Mammary epithelial cell (primary cell): ENCODE measurements at regions of chr16 and their contacts with region 1.

Region 1: DNA sequence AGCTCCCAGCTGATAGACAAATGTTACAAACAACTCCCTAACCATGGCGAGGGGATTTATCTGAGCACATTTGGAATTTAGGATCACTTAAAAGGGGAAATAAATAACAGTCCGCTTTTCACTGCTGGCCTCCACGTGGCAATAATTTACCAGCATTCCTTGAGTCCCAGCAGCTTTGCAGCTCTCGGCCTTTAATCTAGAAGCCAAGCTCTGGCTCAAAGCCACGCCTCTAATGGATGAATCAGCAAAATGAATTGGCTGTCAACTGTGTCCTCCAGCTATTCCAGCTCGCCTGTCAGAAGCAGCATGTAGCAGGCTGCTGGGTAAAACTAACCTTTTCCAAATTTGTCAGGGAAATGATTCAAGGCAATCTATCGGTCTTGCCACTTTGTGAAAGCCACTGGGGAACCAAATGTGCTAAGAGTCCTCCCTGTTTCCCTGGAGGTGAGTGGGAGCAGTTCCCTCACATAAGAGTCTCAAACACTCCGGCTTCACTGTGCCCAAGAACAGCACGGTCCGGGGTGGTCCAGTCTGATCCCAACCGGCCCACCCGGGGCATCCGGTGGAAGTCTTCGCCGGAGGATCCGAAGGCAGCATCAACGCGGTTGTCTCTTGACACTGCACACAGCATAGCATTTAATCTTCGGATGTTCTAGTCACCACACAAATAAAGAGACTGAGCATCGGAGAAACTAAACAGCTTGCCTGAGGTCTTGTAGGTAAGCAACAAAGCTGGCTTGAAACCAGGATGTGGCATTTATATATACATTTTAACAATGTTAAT is 143.3 kb downstream of the PARN start:
- DNase-seq: peak; percentile 87
- H3K4me3 ChIP-seq: peak overlapping the region; percentile 16 to 39 (median 22)
- H3K27ac ChIP-seq: peak overlapping the region; percentile 50
- H3K4me1 ChIP-seq: peaks cover 17% of the 10 kb centered on the region
- H3K27me3 ChIP-seq: no peaks in the 10 kb centered on the region
- CTCF ChIP-seq: no peak

Region 2: DNA sequence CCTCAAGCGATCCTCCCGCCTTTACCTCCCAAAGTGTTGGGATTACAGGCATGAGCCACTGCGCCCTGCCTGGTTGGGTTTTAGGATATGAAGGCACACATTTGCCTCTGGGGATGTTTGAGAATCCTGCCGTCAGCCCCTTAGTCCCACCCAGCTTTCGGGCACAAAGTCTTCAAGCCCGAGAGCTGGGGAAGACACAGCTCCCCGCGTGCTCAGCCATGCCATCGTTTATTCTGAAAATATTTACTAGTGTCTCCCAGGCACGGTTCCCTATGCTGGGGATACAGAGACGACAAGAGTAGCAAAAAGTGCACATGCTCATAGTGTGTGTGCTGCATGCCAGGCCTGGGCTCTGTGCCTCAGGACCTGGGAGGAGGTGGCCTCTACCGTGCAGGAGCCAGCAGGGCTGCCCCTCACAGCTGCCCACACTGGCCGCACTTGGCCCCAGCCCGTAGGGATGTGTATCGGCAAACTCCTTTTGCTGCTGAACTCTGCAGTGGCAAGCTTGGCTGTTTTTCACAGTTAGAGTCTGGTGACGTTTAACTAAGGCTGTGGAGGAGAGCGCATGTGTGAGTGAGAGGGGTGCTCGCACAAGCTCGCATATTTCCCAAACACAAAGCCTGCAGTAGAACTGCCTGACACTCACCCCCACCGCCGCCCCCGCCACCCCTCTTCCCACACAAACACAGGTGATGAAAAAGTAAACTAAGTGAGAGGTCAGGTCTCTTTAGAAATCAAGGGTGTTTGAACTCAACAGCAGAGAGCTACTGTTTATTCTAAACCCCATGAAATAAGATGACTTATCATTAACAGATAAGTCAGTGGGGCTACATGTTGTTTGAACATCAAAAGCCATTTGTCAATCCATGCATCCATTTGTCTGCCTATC is 149.2 kb before region 1 on chr16:
- CTCF ChIA-PET with region 1: no interaction called
- dilution Hi-C with region 1: no loop called
- in situ Hi-C with region 1: no loop called
- intact Hi-C with region 1: no loop called
- DNase-seq: no peak
- H3K4me3 ChIP-seq: no peak overlapping the region
- H3K27ac ChIP-seq: no peak overlapping the region
- H3K4me1 ChIP-seq: peaks cover 6% of the 10 kb centered on the region
- H3K27me3 ChIP-seq: no peaks in the 10 kb centered on the region
- CTCF ChIP-seq: no peak

Region 3: DNA sequence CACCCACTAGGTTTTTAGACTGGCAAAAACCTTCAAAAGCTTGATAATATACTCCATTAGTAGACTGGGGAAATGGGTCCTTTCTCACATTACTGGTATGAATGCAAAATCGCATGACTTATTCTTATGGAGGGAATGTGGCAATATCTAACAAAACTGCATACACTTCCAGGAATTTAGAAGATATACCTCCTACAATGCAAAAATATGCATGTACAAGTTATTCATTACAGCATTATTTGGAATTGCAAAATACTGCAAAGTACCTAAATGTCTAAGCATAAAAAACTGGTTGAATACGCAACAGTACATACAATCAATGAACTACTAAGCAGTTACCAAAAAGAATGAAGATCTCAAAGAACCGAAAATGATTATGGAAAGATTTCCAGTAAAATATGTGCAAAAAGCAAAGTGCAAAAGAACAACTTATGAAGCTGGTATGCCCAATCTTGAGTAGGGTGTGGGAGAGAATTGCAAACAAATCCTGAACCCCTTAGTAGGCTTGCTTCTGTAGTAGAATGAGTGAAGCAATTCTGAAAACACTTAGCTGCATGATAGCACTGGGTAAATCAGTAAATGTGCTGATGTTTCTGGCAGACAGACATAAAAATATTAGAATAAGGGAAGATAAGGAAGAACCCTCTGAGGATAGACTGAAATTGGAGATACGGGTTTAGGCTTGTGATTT is 36.8 kb before region 1 on chr16:
- CTCF ChIA-PET with region 1: no interaction called
- dilution Hi-C with region 1: loop called (anchors 5 kb)
- in situ Hi-C with region 1: no loop called
- intact Hi-C with region 1: no loop called
- DNase-seq: no peak
- H3K4me3 ChIP-seq: no peak overlapping the region
- H3K27ac ChIP-seq: no peak overlapping the region
- H3K4me1 ChIP-seq: no peaks in the 10 kb centered on the region
- H3K27me3 ChIP-seq: no peaks in the 10 kb centered on the region
- CTCF ChIP-seq: no peak

Region 4: GRCh38 chr16:14539631-14540030 is 52.9 kb after region 1 on chr16:
- CTCF ChIA-PET with region 1: interaction called, 11 read pairs
- dilution Hi-C with region 1: no loop called
- in situ Hi-C with region 1: no loop called
- intact Hi-C with region 1: no loop called
- DNase-seq: no peak
- H3K4me3 ChIP-seq: no peak overlapping the region
- H3K27ac ChIP-seq: no peak overlapping the region
- H3K4me1 ChIP-seq: no peaks in the 10 kb centered on the region
- H3K27me3 ChIP-seq: no peaks in the 10 kb centered on the region
- CTCF ChIP-seq: no peak